ENCODE measurements at regions of chr11 and their contacts with region 1.

Region 1: GRCh38 chr11:1546536-1547400 is 25.3 kb downstream of the DUSP8 start:
- DNase-seq: no peak
- ATAC-seq: peak; percentile 42

Region 2: DNA sequence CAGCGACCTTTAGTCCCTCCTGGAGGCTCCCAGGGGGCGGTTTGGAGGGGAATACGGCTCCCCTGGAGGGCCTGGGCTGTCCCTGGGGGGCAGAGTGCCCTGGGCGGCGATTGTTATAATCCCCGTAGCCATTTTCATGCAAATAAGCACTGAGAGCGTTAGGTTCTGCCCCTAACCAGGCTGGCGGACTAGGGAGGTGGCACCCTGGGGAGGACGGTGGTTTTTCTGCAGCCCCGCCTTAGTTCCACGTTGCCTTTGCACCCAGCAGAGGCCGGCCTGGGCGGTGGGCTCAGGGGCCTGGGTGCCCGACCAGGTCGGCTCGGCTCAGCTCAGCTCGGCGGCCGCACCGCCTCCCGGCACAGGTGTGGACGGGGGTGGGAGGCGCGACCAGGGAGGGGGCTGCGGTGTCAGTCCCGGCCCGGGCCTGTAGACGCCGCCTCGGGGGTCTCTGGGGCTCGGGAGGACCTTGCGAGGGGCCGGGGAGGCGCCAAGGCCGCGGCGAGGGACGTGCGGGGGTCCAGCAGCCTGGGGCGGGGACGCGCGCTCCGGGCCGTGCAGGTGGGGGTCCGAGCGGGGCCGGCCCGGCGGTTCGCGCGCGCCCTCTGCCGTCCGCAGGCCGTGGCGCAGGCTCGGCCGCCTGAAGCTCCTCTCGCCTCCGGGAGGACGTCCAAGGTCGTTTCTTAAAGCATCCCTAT is 27.6 kb after region 1 on chr11:
- intact Hi-C with region 1: loop called (anchors 2 kb)
- DNase-seq: peak; percentile 69
- ATAC-seq: peak; percentile 29

Region 3: DNA sequence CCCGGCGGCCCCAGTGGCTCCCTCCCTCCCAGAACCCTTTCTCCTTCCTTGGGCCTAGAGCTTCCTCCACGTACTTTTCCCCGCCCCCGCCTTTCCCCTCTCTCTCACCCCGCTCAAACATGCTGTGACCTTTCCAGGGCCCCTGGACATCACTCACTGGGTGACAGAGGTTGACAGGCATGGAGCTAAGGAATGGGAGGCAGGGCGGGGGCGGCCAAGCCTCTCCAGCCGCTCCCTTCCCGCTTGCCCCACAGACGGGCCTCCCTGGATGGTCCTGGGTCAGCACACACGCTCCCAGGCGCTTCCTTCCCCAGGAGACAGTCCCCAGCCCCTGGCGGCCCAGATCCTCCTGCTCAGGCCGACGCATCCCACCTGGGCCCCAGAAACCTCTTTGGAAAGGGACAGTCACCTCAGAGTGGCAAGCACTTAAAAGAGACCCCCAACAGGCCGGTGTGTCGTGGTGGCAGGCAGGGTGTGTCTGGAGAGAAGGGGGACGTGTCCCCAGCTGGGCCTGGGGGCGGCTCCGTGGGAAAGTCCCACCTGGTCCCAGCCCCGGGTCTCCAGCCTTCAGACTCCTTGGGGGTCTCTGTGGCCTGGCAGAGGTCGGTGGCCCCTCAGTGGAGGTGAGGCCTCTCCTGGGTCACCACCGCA is 442.0 kb after region 1 on chr11:
- intact Hi-C with region 1: no loop called
- DNase-seq: peak; percentile 37
- ATAC-seq: no peak

Measured in sciatic nerve (tissue), 2 donors.